Heart left ventricle (tissue), 16 donors: ENCODE measurements at regions of chr15 and their contacts with region 1.

Region 1: GRCh38 chr15:71575474-71576045 is 234.8 kb upstream of the NR2E3 start:
- DNase-seq: no peak
- ATAC-seq: no peak
- H3K4me3 ChIP-seq: no peak overlapping the region
- H3K27ac ChIP-seq: no peak overlapping the region
- H3K4me1 ChIP-seq: peaks cover 0 to 19% (median 0%) of the 10 kb centered on the region in 12 donors
- H3K27me3 ChIP-seq: no peaks in the 10 kb centered on the region
- CTCF ChIP-seq: peak; percentile 28 to 60 (median 47)
- POLR2A ChIP-seq: no peak

Region 2: GRCh38 chr15:70974004-70974832 is 601.3 kb before region 1 on chr15:
- intact Hi-C with region 1: no loop called
- DNase-seq: no peak
- ATAC-seq: no peak
- H3K4me3 ChIP-seq: no peak overlapping the region
- H3K27ac ChIP-seq: no peak overlapping the region
- H3K4me1 ChIP-seq: no peaks in the 10 kb centered on the region
- H3K27me3 ChIP-seq: no peaks in the 10 kb centered on the region
- CTCF ChIP-seq: peak in 8 of 12 donors; percentile 6 to 45 (median 32)
- POLR2A ChIP-seq: no peak

Region 3: DNA sequence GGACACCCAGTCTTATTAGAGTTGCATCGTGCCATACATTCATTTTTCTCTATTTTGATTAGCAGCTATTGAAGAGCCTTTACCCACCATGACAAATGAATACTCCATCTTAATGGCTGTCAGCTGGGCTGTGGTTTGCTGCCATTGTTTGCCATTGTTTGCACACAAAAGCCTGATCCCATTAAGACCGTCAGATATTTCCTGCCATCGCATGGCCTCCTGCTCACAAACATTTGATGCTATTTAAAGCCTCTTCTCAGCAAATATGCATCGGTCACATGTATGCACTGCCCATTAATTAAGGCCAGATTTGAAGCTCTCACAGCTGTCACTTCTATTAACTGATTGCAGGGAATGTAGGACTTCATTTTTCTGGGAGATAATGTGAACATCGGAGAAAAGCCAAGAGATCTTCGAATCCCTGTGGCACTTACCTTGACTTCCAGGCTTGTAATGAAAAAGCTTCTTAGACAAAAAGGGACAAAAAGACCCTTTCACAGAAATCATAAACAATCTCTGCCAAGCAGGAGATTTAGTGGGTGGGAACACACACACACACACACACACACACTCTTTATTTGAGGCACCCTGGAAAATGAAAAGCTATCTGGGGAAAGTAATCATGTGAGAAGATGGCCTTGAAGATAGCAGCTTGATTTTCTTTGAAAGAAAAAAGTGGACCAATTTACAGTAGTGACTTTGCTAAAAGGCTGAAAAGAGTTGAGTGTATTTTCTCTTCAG is 59.4 kb after region 1 on chr15:
- intact Hi-C with region 1: no loop called
- DNase-seq: no peak
- ATAC-seq: peak in 1 of 4 donors; percentile 48
- H3K4me3 ChIP-seq: no peak overlapping the region
- H3K27ac ChIP-seq: peak overlapping the region in 6 of 12 donors; percentile 1 to 46 (median 23)
- H3K4me1 ChIP-seq: peaks cover 0 to 36% (median 12%) of the 10 kb centered on the region in 12 donors
- H3K27me3 ChIP-seq: no peaks in the 10 kb centered on the region
- CTCF ChIP-seq: no peak
- POLR2A ChIP-seq: no peak

Region 4: DNA sequence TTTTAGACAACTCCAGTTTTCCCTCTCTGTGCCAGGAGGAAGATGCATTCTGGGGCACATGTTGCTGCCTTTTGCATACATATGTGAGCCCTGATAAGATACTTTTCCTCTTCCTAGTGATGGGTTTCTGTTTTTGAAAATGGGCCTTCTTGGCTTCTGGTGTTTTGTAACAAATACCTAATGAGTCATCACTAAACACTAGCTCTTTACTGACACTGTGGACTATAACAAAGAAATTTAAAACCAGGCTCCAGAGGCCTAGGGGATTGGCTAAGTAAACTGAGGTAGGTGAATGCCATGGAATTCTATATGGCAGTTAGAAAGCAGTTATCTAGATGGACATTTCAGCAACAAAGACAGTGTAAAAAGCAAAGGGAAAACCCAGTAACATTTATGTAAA is 141.4 kb after region 1 on chr15:
- intact Hi-C with region 1: loop called in 1 of 10 experiments (anchors 10 kb)
- DNase-seq: no peak
- ATAC-seq: no peak
- H3K4me3 ChIP-seq: no peak overlapping the region
- H3K27ac ChIP-seq: peak overlapping the region in 3 of 12 donors; percentile 4 to 20 (median 17)
- H3K4me1 ChIP-seq: peaks cover 0 to 32% (median 7%) of the 10 kb centered on the region in 12 donors
- H3K27me3 ChIP-seq: no peaks in the 10 kb centered on the region
- CTCF ChIP-seq: no peak
- POLR2A ChIP-seq: no peak

Region 5: DNA sequence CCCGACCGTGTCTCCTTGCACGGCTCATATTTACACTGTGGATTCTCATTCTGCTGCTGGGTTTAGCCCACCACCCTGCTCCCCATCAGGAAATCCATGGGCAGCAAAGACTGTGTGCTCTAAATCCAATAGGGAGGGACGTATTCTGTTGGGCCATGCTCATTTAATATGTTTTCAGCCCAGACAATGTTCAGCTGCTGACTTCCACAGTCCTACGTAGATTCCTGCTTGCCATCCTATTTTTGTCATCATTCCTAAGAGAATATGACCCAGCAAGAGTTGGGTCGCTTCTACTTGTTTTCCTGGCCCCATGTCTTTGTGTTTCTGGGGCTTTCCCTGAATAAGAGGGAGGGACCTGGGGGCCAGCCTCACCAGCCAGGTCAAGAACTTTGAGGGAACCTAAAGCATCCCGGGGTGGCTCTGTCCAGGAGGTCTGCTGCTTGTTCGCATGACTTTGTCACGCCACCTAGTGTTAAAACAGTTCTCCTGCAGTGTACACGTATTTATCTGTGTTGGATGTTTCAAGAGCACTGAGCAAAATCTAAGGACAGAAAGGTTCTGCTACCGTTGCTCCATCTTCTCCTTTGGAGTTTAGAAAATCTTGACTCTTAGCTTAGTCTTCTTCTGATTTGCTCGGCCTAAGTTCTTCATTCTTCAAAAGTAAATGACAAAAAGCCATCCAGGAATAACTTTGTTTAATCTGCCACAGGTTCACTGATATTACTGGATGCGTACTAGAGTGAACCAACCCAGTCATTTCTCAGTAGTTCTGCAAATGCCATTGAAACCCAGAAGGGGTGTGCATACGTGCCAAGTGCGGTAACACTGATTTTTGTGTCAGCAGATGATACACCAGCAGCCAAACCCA is 155.0 kb after region 1 on chr15:
- intact Hi-C with region 1: loop called in 9 of 10 experiments (anchors 1 to 10 kb)
- DNase-seq: peak in 3 of 5 donors; percentile 48 to 58 (median 51)
- ATAC-seq: peak; percentile 75 to 82 (median 80)
- H3K4me3 ChIP-seq: no peak overlapping the region
- H3K27ac ChIP-seq: peak overlapping the region in 6 of 12 donors; percentile 0 to 54 (median 19)
- H3K4me1 ChIP-seq: peaks cover 0 to 29% (median 8%) of the 10 kb centered on the region in 12 donors
- H3K27me3 ChIP-seq: no peaks in the 10 kb centered on the region
- CTCF ChIP-seq: peak; percentile 65 to 86 (median 79)
- POLR2A ChIP-seq: no peak